Endothelial cell of umbilical vein (primary cell): ENCODE measurements at regions of chr4 and their contacts with region 1.

Region 1: DNA sequence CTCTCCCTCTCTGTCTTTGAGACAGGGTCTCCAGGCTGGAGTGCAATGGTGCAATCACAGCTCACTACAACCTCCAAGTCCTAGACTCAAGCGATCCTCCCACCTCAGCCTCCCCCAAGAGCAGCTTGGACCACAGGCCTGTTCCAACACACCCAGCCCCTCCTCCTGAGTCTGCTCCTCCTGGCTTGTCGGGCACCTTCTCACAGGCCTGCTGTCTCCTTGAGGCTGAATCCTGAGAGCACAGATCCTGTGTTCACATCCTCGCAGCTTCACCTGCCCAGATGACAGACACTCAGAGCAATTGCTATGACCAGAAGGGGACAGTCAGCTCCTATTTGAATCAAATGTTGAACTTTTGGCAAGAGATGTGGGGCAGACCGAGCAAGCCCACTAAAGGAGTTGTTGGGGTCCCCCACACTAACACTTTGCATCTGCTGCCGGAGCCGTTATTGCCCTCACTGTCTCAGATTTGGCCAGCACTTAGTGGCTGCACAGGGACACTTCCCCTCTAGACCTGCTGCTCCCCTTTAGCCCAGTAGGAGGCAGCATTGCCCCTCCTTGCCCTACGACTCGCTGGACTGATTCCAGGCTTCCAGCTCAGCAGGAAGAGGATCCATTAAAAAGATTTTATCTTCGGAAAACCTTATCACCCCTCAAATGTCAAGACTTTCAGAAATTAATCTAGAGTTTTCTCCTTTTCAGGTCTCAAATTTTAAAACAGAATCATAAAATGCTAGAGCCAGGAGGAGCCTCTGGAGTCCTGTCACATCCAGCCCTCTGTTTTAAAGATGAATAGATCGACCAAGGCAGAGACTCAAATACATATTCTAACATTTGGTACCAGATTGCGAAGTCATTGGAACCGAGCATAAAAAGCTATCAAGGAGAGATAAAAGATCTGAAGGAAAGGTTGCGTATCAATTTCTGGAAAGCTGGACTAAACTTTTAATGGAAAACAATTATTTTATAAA is 113.7 kb downstream of the USP46 start:
- DNase-seq: peak; percentile 71
- H3K4me3 ChIP-seq: no peak overlapping the region
- H3K27ac ChIP-seq: no peak overlapping the region
- H3K4me1 ChIP-seq: no peaks in the 10 kb centered on the region
- H3K27me3 ChIP-seq: peaks cover 3 to 6% of the 10 kb centered on the region in 2 experiments
- CTCF ChIP-seq: peak; percentile 92 to 94
- POLR2A ChIP-seq: no peak

Region 2: GRCh38 chr4:52574036-52574435 is 28.7 kb after region 1 on chr4:
- CTCF ChIA-PET with region 1: no interaction called
- POLR2A ChIA-PET with region 1: no interaction called
- dilution Hi-C with region 1: no loop called
- intact Hi-C with region 1: no loop called
- DNase-seq: no peak
- H3K4me3 ChIP-seq: no peak overlapping the region
- H3K27ac ChIP-seq: no peak overlapping the region
- H3K4me1 ChIP-seq: no peaks in the 10 kb centered on the region
- H3K27me3 ChIP-seq: no peaks in the 10 kb centered on the region
- CTCF ChIP-seq: no peak
- POLR2A ChIP-seq: no peak

Region 3: DNA sequence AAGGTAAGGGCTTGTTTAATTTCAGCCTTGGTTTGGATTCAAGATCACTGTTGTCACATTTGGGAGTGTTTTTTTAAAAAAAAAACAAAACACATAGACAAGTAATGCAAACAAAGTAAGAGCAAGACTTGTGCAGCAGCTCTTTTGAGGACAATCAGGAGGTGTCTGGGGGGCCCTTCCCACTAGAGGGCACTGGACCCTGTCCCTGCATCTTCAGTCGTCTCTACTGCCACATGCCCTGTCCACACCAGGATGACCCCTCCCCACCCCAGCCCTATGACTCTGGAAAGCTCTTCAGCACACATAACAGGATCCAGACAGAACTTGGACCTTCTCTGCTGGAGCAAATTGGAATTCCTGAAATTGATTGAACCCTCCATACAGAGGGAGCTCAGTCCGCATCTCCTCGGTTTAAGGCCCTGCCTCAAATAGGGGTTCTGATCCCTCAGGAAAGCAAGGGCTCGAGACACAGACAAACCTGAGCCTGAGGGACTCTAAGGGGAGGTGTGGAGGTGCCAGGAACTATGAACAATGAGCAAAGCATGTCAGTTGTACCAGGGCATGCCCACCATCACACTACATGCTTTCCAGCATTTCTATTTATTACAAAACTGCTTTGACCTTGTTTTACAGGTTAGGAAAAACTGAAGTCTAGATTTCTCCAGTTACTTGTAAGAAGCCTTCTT is 42.9 kb after region 1 on chr4:
- CTCF ChIA-PET with region 1: interaction called, 19 read pairs
- POLR2A ChIA-PET with region 1: no interaction called
- dilution Hi-C with region 1: no loop called
- intact Hi-C with region 1: loop called (anchors 2 kb)
- DNase-seq: peak; percentile 67
- H3K4me3 ChIP-seq: no peak overlapping the region
- H3K27ac ChIP-seq: peak overlapping the region; percentile 96
- H3K4me1 ChIP-seq: peaks cover 17% of the 10 kb centered on the region
- H3K27me3 ChIP-seq: no peaks in the 10 kb centered on the region
- CTCF ChIP-seq: peak; percentile 55 to 73
- POLR2A ChIP-seq: no peak

Region 4: DNA sequence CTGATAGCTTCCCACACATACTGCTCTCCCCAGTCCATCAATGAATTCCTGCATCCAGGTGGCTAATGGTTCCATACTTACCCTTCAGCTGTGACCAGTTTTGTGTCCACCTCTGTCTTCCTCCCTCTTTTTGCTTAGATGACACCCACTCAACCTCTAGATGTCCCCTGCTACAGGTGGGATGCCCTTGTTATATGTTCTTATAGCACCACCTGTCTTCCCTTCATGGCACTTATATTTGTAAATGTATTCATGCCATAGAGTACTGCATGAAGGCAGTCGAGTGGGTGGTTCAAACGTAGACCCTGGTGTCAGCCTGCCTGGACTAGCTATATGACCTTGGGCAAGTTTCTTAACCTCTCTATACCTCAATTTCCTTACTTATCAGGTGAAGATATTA is 120.2 kb after region 1 on chr4:
- CTCF ChIA-PET with region 1: interaction called, 38 read pairs
- POLR2A ChIA-PET with region 1: no interaction called
- dilution Hi-C with region 1: no loop called
- intact Hi-C with region 1: loop called (anchors 2 kb)
- DNase-seq: peak; percentile 47
- H3K4me3 ChIP-seq: no peak overlapping the region
- H3K27ac ChIP-seq: no peak overlapping the region
- H3K4me1 ChIP-seq: peaks cover 4% of the 10 kb centered on the region
- H3K27me3 ChIP-seq: peaks cover 6% of the 10 kb centered on the region in 2 experiments
- CTCF ChIP-seq: peak in 1 of 2 donors; percentile 9
- POLR2A ChIP-seq: no peak

Region 5: DNA sequence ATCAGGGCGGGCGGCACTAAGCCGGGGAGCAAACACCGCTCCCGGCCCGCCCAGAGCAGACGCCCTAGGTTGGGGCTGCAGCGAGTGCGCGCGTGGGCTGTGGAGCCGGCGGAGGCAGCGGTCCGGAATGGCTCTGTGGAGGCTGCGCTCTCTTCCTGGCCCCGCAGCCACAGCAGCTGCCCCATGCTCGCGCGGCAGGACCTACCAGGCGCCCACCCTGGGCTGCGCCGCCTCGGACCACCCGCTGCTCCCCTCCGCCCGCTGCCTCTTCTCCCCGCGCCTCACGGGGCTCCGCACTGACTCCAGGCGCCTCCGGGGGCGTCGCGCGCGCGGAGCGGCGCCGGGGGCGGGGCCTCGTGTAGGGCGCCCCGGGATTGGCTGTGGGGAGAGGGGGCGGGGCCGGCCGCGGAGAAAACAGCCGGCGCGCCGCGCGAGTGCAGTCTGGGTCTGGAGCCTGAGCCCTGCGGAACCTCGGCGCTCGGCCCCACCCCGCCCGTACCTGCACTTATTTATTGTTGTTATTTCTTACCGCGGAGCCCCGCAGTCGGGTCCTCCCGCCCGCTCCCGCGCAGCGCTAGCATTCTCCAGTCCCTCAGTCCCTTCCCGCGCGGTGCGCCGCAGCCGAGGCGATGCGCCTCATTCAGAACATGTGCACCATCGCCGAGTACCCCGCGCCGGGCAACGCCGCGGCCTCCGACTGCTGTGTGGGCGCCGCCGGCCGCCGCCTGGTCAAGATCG is 316.7 kb after region 1 on chr4 and contains the start of gene RASL11B:
- CTCF ChIA-PET with region 1: interaction called, 6 read pairs
- POLR2A ChIA-PET with region 1: no interaction called
- dilution Hi-C with region 1: no loop called
- intact Hi-C with region 1: loop called (anchors 10 kb)
- DNase-seq: peak; percentile 78
- H3K4me3 ChIP-seq: peak within 1 kb of the TSS; percentile 5 to 50 (median 38)
- H3K27ac ChIP-seq: no peak within 1 kb of the TSS
- H3K4me1 ChIP-seq: peaks cover 9% of the 10 kb centered on the region
- H3K27me3 ChIP-seq: peaks cover 32 to 55% of the 10 kb centered on the region in 2 experiments
- CTCF ChIP-seq: no peak
- POLR2A ChIP-seq: no peak
- total RNA-seq, gene RASL11B: not detected in 2 replicates

Region 6: DNA sequence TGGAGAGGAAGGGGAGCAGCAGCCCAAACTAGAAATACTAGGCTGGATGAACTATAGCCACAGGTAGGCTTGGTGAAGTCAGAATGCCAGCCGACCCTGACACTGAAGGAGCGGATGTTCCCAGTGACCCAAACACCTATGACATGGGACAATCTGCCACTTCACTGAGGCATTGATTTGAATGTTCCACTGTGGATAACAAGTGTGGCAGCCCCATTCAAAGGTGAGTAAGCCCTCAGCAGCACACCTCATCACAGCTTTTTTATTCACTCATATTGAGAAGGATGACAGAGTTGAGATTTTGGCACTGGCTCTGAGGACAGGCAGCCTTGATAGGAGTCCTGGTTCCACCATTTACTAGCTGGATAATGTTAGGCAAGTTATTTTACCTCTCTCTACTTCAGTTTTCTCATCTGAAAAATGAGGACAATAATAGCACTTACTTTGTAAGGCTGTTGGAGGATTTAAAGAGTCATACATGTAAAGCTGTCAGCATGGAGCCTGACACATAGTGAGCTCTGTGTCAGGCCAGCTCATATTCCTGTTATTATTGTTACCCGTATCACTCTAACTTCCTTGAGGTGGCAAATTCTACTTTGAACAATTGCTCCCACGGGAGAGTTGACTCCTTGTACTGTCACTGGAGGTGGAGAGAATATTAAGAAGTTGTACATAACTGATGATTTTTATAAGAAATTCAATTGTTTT is 431.3 kb after region 1 on chr4:
- CTCF ChIA-PET with region 1: interaction called, 238 read pairs
- POLR2A ChIA-PET with region 1: no interaction called
- dilution Hi-C with region 1: no loop called
- intact Hi-C with region 1: no loop called
- DNase-seq: peak; percentile 5
- H3K4me3 ChIP-seq: no peak overlapping the region
- H3K27ac ChIP-seq: no peak overlapping the region
- H3K4me1 ChIP-seq: peaks cover 3% of the 10 kb centered on the region
- H3K27me3 ChIP-seq: no peaks in the 10 kb centered on the region
- CTCF ChIP-seq: no peak
- POLR2A ChIP-seq: no peak

Region 7: GRCh38 chr4:53929955-53930798 is 1384.8 kb after region 1 on chr4:
- CTCF ChIA-PET with region 1: no interaction called
- POLR2A ChIA-PET with region 1: no interaction called
- dilution Hi-C with region 1: no loop called
- intact Hi-C with region 1: no loop called
- DNase-seq: peak; percentile 88
- H3K4me3 ChIP-seq: no peak overlapping the region
- H3K27ac ChIP-seq: no peak overlapping the region
- H3K4me1 ChIP-seq: peaks cover 4% of the 10 kb centered on the region
- H3K27me3 ChIP-seq: peaks cover 0 to 3% of the 10 kb centered on the region in 2 experiments
- CTCF ChIP-seq: peak; percentile 71 to 79
- POLR2A ChIP-seq: no peak